GM23248 (cell line): ENCODE measurements at regions of chr3 and their contacts with region 1.

Region 1: DNA sequence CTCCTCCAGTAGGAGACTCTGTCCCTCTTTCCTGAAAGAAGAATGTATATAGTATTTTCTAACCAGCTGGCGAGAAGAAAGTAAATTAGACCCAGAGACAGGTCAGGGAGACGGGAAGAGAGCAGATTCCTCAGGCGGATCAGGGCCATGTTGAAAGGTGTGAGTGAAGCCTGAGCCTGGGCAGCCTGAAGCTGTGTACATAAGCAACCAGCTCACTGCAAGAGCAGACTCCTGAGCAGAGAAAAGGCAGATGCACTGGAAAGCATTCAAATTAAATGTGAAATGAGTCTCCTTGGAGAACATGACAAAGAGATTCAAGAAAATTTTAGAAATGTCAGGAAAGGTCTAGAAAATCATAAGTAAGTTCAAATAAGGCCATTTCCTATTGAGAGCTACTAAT is 165.8 kb downstream of the GOLIM4 start:
- DNase-seq: no peak
- H3K4me3 ChIP-seq: no peak overlapping the region
- H3K27ac ChIP-seq: no peak overlapping the region
- H3K4me1 ChIP-seq: no peaks in the 10 kb centered on the region
- H3K27me3 ChIP-seq: peaks cover 17% of the 10 kb centered on the region

Region 2: GRCh38 chr3:168034152-168034928 is 104.4 kb after region 1 on chr3:
- in situ Hi-C with region 1: loop called (anchors 10 kb)
- DNase-seq: peak; percentile 89
- H3K4me3 ChIP-seq: no peak overlapping the region
- H3K27ac ChIP-seq: no peak overlapping the region
- H3K4me1 ChIP-seq: peaks cover 10% of the 10 kb centered on the region
- H3K27me3 ChIP-seq: no peaks in the 10 kb centered on the region